Heart left ventricle (tissue), 16 donors: ENCODE measurements at regions of chr3 and their contacts with region 1.

Region 1: GRCh38 chr3:11671648-11672100 is 28.0 kb upstream of the VGLL4 start:
- DNase-seq: peak in 4 of 5 donors; percentile 19 to 43 (median 32)
- ATAC-seq: peak in 3 of 4 donors; percentile 45 to 72 (median 63)
- H3K4me3 ChIP-seq: no peak overlapping the region
- H3K27ac ChIP-seq: no peak overlapping the region
- H3K4me1 ChIP-seq: peaks cover 0 to 29% (median 19%) of the 10 kb centered on the region in 12 donors
- H3K27me3 ChIP-seq: no peaks in the 10 kb centered on the region
- CTCF ChIP-seq: no peak
- POLR2A ChIP-seq: no peak

Region 2: DNA sequence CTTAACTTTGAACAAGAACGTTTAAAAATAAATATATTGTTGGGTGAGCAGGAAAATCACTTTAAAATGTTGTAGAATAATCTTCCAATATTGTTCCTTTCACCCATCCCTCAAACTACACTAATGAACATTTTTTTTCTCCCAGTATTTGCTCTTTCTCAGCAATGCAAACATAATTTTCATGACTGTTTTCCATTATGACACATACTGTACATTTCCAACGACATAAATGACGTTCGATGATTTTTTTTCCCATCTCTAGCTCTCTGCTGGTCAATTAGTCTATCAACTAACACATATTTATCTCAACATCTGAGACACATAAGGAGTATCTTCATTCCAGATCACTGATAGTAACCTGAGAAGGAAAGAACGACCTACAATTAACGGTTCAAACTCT is 30.2 kb after region 1 on chr3:
- intact Hi-C with region 1: loop called in 1 of 10 experiments (anchors 2 kb)
- DNase-seq: no peak
- ATAC-seq: no peak
- H3K4me3 ChIP-seq: no peak overlapping the region
- H3K27ac ChIP-seq: no peak overlapping the region
- H3K4me1 ChIP-seq: peaks cover 0 to 5% (median 0%) of the 10 kb centered on the region in 12 donors
- H3K27me3 ChIP-seq: no peaks in the 10 kb centered on the region
- CTCF ChIP-seq: no peak
- POLR2A ChIP-seq: no peak

Region 3: DNA sequence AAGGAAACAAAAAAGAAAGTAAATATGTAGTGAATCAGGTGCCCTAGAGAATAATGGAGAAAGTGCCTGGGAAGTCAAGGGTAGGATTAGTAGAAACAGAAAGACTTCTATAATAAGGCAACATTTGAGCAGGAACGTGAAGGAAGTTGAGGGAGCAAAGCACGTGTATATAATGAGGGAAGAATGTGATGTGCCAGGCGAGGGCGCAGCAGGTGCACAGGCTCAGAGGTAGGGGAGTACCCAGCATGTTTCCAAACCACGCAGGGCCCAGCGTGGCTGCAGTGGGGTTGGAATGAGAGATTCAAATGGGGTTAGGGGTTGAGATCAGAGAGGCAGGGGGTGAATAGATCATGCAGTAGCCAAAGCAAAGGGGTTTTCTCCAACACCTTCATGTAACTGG is 64.0 kb after region 1 on chr3:
- intact Hi-C with region 1: no loop called
- DNase-seq: no peak
- ATAC-seq: no peak
- H3K4me3 ChIP-seq: no peak overlapping the region
- H3K27ac ChIP-seq: no peak overlapping the region
- H3K4me1 ChIP-seq: no peaks in the 10 kb centered on the region
- H3K27me3 ChIP-seq: no peaks in the 10 kb centered on the region
- CTCF ChIP-seq: no peak
- POLR2A ChIP-seq: no peak